HepG2 (cell line): ENCODE measurements at regions of chr21 and their contacts with region 1.

Region 1: DNA sequence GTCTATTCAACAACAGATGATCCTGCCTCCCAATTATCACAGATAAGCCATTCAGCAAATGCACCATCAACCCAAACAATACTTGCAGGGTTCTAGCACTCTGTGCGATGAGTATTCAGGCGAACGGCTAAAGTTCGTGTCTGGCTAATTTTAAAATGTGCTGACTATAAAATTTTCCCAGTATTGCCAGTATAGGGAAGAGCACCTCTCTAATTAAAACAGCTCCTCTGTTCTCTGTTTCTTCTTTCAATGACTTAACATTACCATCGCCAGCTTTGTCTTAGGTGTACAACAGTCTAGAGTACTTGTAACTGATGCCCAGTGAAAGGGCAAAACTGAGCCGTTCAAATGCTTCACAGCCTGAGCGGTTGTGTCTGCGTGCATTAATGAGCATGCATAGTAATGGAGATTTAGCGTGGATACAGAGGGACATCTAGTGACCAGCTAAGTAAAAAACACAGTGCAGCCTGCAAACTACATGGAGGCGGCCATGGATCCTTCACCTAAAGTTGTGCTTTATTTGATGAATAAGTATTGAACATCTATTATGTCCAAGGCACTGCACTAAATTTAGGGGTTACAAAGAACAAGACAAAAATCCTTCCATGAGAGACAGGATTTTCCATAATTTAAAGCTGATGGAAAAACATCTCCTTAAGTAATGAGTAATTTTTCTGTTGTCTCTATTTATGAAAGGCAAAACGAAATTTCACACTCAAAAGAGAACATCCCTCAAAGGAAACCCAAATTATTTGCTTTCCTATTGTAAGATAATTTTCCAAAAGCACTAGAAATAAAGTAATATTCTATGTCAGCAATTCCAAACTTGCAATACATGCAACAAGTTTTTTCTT is 120.0 kb downstream of the SETD4 start:
- DNase-seq: peak; percentile 45
- ATAC-seq: peak; percentile 96
- H3K4me3 ChIP-seq: no peak overlapping the region; a peak in 1 of 6 replicates
- H3K27ac ChIP-seq: no peak overlapping the region
- H3K4me1 ChIP-seq: peaks cover 9% of the 10 kb centered on the region; the same call in 1 of the 2 replicates
- H3K27me3 ChIP-seq: no peaks in the 10 kb centered on the region
- CTCF ChIP-seq: peak; percentile 88
- EP300 ChIP-seq: no peak
- POLR2A ChIP-seq: no peak
- RAD21 ChIP-seq: peak; percentile 47; the same call in 1 of the 2 replicates

Region 2: DNA sequence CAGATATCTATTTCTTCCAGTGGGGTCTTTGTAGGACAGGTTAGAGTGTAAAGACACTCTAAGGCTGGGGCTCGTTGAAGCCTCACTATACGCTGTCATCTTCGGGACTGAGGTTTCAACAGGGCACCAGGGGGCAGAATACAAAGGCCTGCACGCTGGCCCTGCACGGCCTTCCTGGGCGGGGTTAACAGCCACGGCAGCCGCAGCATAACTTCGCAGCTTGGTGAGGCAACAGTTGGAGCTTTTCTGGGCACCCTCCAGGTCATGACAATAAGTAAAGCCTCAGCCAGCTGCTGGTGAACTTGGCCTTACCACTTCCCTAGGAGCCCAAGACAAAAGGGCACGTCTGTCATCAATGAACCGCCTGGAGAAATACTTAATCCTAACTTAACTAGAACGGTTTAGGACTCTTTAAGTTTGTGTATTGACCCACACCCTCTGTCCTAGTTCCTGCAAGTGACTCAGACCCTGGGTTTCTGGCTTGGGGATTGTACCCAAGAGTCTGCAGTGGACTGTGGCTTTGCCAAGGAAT is 888.9 kb before region 1 on chr21:
- CTCF ChIA-PET with region 1: no interaction called
- POLR2A ChIA-PET with region 1: no interaction called
- in situ Hi-C with region 1: no loop called
- intact Hi-C with region 1: loop called (anchors 1 kb)
- DNase-seq: peak; percentile 82
- ATAC-seq: peak; percentile 99
- H3K4me3 ChIP-seq: peak overlapping the region in 2 of 3 experiments; percentile 26 to 32; a peak in 1 of 6 replicates
- H3K27ac ChIP-seq: no peak overlapping the region
- H3K4me1 ChIP-seq: peaks cover 45% of the 10 kb centered on the region
- H3K27me3 ChIP-seq: no peaks in the 10 kb centered on the region
- CTCF ChIP-seq: peak; percentile 88
- EP300 ChIP-seq: peak in 1 of 2 experiments; percentile 19; a peak in 1 of 4 replicates
- POLR2A ChIP-seq: no peak
- RAD21 ChIP-seq: peak; percentile 83

Region 3: DNA sequence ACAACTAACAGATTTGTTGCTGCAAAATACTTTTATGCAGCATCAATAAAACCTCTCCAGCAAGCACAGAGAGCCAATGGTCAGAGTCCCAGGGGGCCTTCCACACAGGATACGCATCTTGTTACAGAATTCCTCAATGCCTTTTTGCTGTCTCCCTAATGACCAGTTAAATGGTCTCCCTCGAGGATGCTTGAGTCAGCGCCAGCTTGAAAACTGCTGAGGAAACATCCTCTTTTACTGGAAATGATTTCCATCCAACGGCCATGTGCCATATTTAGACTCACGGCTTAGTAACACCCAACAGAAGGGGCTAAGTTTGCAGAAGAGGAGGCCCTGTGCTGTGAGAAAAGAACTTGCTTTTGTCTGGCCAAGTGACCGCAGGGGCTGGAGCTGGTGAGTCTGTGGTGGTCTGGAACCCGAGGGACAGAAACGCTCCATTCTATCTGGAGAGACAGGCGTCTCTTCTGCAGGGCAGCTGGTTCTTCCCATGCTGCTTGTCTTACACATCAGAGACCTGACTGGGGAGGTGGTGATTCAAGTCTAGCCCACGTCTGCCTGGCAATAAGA is 376.3 kb before region 1 on chr21:
- CTCF ChIA-PET with region 1: no interaction called
- POLR2A ChIA-PET with region 1: no interaction called
- in situ Hi-C with region 1: no loop called
- intact Hi-C with region 1: no loop called
- DNase-seq: no peak
- ATAC-seq: no peak
- H3K4me3 ChIP-seq: no peak overlapping the region
- H3K27ac ChIP-seq: no peak overlapping the region
- H3K4me1 ChIP-seq: no peaks in the 10 kb centered on the region
- H3K27me3 ChIP-seq: no peaks in the 10 kb centered on the region
- CTCF ChIP-seq: no peak
- EP300 ChIP-seq: no peak
- POLR2A ChIP-seq: no peak
- RAD21 ChIP-seq: no peak

Region 4: DNA sequence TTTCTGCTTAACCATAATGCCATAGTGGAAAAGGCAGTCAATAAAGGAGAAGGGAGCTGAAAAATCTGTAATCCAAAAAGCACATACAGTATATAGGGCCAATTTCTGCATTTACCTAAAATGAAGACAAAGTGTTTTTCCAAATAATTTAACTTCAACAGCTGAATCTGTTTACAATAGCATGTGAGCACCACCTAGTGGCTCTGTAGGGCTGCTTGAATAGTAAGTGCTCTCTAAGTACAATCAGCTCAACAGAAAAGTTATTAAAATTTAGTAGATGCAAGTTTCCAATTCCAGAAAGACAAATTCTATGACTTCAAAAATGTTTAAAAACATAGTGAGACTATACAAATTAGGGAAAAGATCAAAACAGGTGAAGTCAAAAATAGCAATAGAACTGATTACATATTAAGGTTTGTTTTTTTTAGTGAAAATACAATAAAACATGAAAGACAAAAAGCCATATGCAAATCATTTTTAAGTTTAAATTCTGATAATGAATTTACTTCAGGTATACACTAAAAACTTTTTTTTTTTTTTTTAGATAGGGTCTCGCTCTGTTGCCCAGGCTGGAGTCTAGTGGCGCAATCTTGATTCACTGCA is 100.0 kb before region 1 on chr21:
- CTCF ChIA-PET with region 1: no interaction called
- POLR2A ChIA-PET with region 1: no interaction called
- in situ Hi-C with region 1: no loop called
- intact Hi-C with region 1: loop called (anchors 1 kb)
- DNase-seq: peak; percentile 50
- ATAC-seq: peak; percentile 50; the same call in 1 of the 3 replicates
- H3K4me3 ChIP-seq: no peak overlapping the region
- H3K27ac ChIP-seq: no peak overlapping the region
- H3K4me1 ChIP-seq: no peaks in the 10 kb centered on the region
- H3K27me3 ChIP-seq: no peaks in the 10 kb centered on the region
- CTCF ChIP-seq: peak; percentile 69
- EP300 ChIP-seq: no peak
- POLR2A ChIP-seq: no peak
- RAD21 ChIP-seq: peak; percentile 47; the same call in 1 of the 2 replicates

Region 5: GRCh38 chr21:35885942-35886541 is 54.3 kb before region 1 on chr21:
- CTCF ChIA-PET with region 1: no interaction called
- POLR2A ChIA-PET with region 1: no interaction called
- in situ Hi-C with region 1: no loop called
- intact Hi-C with region 1: loop called (anchors 1 kb)
- DNase-seq: peak; percentile 10
- ATAC-seq: no peak
- H3K4me3 ChIP-seq: no peak overlapping the region
- H3K27ac ChIP-seq: no peak overlapping the region
- H3K4me1 ChIP-seq: peaks cover 10% of the 10 kb centered on the region
- H3K27me3 ChIP-seq: no peaks in the 10 kb centered on the region
- CTCF ChIP-seq: peak; percentile 47
- EP300 ChIP-seq: no peak
- POLR2A ChIP-seq: no peak
- RAD21 ChIP-seq: no peak

Region 6: GRCh38 chr21:36028127-36029069 is 88.1 kb after region 1 on chr21:
- CTCF ChIA-PET with region 1: interaction called, 3 read pairs
- POLR2A ChIA-PET with region 1: no interaction called
- in situ Hi-C with region 1: no loop called
- intact Hi-C with region 1: loop called (anchors 2 kb)
- DNase-seq: peak; percentile 47
- ATAC-seq: peak; percentile 92
- H3K4me3 ChIP-seq: no peak overlapping the region
- H3K27ac ChIP-seq: no peak overlapping the region
- H3K4me1 ChIP-seq: peaks cover 6% of the 10 kb centered on the region; the same call in 1 of the 2 replicates
- H3K27me3 ChIP-seq: no peaks in the 10 kb centered on the region
- CTCF ChIP-seq: peak; percentile 97
- EP300 ChIP-seq: no peak
- POLR2A ChIP-seq: no peak
- RAD21 ChIP-seq: peak; percentile 89